WTC11 (cell line): ENCODE measurements at regions of chr10 and their contacts with region 1.

Region 1: GRCh38 chr10:103712570-103713498 is 142.5 kb downstream of the SH3PXD2A start:
- DNase-seq: peak; percentile 92
- ATAC-seq: peak; percentile 84
- H3K4me3 Mint-ChIP-seq: no peak overlapping the region
- H3K27ac Mint-ChIP-seq: peak overlapping the region; percentile 30; the same call in 1 of the 2 replicates
- H3K4me1 Mint-ChIP-seq: peaks cover 9% of the 10 kb centered on the region
- H3K27me3 Mint-ChIP-seq: no peaks in the 10 kb centered on the region
- CTCF ChIP-seq: peak; percentile 90

Region 2: GRCh38 chr10:103626178-103626577 is 86.7 kb before region 1 on chr10:
- CTCF ChIA-PET with region 1: no interaction called
- POLR2A ChIA-PET with region 1: no interaction called
- DNase-seq: no peak
- ATAC-seq: no peak
- H3K4me3 Mint-ChIP-seq: no peak overlapping the region
- H3K27ac Mint-ChIP-seq: peak overlapping the region; percentile 60; the same call in 1 of the 2 replicates
- H3K4me1 Mint-ChIP-seq: no peaks in the 10 kb centered on the region
- H3K27me3 Mint-ChIP-seq: no peaks in the 10 kb centered on the region
- CTCF ChIP-seq: no peak

Region 3: DNA sequence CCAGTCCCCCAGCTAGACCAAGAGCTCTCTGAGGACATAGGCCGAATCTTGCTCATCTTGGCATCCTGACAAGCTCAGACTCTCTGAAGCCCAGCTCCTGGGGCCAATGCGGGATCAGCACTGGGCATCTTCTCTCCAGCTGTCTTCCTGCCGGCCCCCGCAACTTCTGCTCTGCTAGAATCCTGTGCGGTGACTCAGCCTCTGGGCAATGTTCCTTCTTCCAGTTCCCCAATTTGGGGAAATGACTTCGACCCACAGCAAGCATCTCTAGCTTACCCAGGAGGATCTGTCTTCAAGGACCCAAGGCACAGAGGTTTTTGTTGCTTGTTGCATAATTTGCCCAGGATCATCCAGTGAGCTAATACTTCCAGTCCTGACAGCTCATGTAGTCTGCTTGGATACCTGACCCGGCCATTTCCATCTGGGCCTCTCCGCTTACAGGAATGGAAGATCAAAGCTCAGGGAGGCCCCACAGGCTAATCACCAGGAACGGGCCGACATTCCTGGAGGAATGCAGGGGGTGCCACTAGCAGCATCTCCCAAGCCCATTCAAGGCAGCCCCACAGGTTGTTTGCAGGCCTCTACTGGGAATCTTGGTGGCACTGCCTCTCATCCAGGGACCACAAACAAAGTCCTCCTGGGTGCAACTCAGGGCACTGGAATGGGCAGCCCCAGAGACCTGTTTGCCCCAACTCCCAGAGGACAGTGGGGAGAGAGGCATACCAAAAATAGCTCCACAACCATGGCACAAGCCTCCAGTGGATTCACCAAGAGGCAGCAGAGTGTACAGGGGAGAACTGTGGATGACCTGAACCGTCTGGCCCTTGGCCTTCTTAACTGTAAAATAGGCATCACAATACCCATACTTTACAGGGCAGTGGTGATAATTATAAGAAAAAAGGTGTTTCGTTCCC is 67.4 kb before region 1 on chr10:
- CTCF ChIA-PET with region 1: no interaction called
- POLR2A ChIA-PET with region 1: no interaction called
- DNase-seq: no peak
- ATAC-seq: no peak
- H3K4me3 Mint-ChIP-seq: no peak overlapping the region
- H3K27ac Mint-ChIP-seq: peak overlapping the region; percentile 12; the same call in 1 of the 2 replicates
- H3K4me1 Mint-ChIP-seq: peaks cover 31% of the 10 kb centered on the region
- H3K27me3 Mint-ChIP-seq: no peaks in the 10 kb centered on the region
- CTCF ChIP-seq: no peak

Region 4: DNA sequence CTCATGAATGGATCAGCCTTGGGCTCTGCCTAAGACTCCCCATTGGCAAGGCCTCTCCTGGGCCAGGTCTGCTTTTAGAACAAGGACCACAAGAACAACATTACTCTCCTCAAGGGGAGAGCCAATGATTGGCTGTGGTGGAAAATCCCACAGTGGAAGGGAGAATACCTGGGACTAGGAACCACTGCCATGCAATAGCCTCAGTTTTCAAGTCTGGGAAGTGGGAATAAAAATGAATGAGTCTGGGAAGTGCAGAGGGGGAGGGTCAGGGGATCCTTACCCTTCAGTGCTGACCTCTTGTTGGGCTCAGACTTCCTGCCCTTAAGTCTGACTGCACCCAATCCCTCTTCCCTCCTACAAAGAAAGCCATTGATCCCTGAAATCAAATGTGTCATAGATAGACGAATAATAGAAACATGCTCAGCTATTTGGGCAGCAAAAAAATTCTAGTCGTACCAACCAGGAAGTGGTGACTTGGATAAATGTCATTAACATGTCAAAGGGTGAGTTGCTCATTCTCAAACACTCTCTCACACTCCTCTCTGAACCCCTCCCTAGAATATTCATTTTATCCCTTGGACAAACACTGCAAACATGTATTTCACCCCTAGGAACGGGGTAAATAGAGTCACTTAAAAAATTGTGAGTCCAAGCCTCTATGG is 18.9 kb after region 1 on chr10:
- CTCF ChIA-PET with region 1: interaction called, 17 read pairs
- POLR2A ChIA-PET with region 1: no interaction called
- DNase-seq: no peak
- ATAC-seq: no peak
- H3K4me3 Mint-ChIP-seq: no peak overlapping the region
- H3K27ac Mint-ChIP-seq: peak overlapping the region; percentile 29; the same call in 1 of the 2 replicates
- H3K4me1 Mint-ChIP-seq: peaks cover 42% of the 10 kb centered on the region
- H3K27me3 Mint-ChIP-seq: no peaks in the 10 kb centered on the region
- CTCF ChIP-seq: no peak

Region 5: DNA sequence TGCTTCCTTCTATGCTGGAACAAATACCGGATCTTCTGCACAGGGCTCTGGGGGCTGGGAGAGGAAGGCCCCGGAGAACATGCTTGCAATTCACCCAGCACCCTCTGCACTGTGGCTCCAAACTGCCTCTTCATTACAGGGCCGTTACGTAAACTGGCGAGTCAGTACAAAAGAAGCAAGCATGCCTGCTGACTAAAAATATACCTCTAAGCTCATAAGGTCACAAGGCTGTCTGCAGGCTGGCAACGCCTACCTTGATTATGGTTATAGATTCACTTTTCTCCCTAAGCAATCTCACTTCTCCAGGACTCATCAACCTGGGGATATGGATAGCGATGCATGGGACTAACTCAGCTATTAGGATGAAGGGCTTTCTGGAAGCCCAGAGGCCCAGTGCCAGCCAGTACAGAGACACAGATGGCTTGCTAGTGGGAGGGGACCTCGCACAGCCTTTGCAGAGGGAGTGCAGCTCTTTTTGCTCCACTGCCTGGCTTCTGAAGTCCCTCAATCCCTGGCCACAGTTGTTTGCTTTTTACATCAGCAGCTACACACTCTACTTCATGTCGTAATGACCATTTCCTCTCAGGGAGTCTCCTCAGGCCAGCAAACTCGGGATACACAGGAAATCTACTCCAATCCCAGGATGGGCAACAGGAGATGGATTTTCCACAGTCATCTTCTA is 46.4 kb after region 1 on chr10:
- CTCF ChIA-PET with region 1: interaction called, 14 read pairs
- POLR2A ChIA-PET with region 1: no interaction called
- DNase-seq: no peak
- ATAC-seq: no peak
- H3K4me3 Mint-ChIP-seq: no peak overlapping the region
- H3K27ac Mint-ChIP-seq: peak overlapping the region; percentile 21; the same call in 1 of the 2 replicates
- H3K4me1 Mint-ChIP-seq: peaks cover 50% of the 10 kb centered on the region
- H3K27me3 Mint-ChIP-seq: no peaks in the 10 kb centered on the region; the same call in 1 of the 2 replicates
- CTCF ChIP-seq: no peak

Region 6: DNA sequence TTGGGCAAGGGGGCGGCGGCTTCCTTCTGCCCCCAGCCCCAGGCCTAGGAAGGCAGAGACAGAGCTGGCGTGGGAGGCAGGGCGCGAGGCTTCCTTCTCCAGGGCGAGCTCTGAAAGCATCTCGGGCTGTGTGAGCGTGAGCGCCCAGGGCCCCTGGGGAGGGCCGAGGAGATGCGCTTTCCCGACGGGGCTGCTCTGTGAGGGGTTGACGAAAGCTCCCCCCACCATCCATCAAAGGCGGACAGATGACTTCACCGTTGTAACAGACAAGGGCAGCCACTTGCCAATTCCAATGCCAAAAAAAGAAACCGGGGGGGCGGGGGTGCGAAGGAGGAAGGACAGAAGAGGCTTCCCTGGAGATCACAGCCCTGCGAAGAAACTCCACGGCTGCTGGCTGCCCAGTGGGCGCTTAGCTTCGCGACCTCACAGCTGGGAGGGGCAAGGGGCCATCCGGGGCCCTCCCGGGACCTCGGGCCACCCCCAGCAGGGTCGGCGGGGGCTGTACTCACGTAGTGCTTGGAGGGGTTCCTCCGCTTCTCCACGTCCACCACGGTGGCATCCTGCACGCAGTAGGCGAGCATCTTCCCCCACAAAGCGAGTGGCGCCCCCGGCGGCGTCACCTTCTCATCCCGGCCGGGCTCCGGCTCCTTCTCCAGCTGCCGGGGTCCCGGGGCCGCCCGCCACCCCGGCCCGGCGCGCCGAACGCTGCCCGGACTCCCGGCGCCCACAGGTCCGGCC is 142.0 kb after region 1 on chr10:
- CTCF ChIA-PET with region 1: interaction called, 64 read pairs
- POLR2A ChIA-PET with region 1: interaction called, 3 read pairs
- DNase-seq: peak; percentile 53
- ATAC-seq: peak; percentile 11
- H3K4me3 Mint-ChIP-seq: peak overlapping the region; percentile 84
- H3K27ac Mint-ChIP-seq: no peak overlapping the region
- H3K4me1 Mint-ChIP-seq: peaks cover 26% of the 10 kb centered on the region
- H3K27me3 Mint-ChIP-seq: peaks cover 43% of the 10 kb centered on the region
- CTCF ChIP-seq: no peak